Right cardiac atrium (tissue), 5 donors: ENCODE measurements at regions of chr4 and their contacts with region 1.

Region 1: GRCh38 chr4:99405433-99406115 is 29.6 kb downstream of the ADH7 start:
- DNase-seq: peak; percentile 56 to 57 (median 57)
- ATAC-seq: peak; percentile 77 to 84
- H3K4me3 ChIP-seq: no peak overlapping the region
- H3K27ac ChIP-seq: no peak overlapping the region
- H3K4me1 ChIP-seq: no peaks in the 10 kb centered on the region
- H3K27me3 ChIP-seq: no peaks in the 10 kb centered on the region

Region 2: GRCh38 chr4:98462484-98462883 is 943.1 kb before region 1 on chr4:
- intact Hi-C with region 1: loop called in 2 of 4 experiments (anchors 5 to 10 kb)
- DNase-seq: no peak
- ATAC-seq: no peak
- H3K4me3 ChIP-seq: no peak overlapping the region
- H3K27ac ChIP-seq: no peak overlapping the region
- H3K4me1 ChIP-seq: no peaks in the 10 kb centered on the region
- H3K27me3 ChIP-seq: no peaks in the 10 kb centered on the region

Region 3: GRCh38 chr4:98467627-98468072 is 937.9 kb before region 1 on chr4:
- intact Hi-C with region 1: loop called in 2 of 4 experiments (anchors 5 to 10 kb)
- DNase-seq: peak; percentile 55 to 79 (median 73)
- ATAC-seq: peak; percentile 91 to 93
- H3K4me3 ChIP-seq: peak overlapping the region; percentile 53
- H3K27ac ChIP-seq: no peak overlapping the region
- H3K4me1 ChIP-seq: peaks cover 3% of the 10 kb centered on the region
- H3K27me3 ChIP-seq: no peaks in the 10 kb centered on the region

Region 4: GRCh38 chr4:99117876-99118693 is 287.5 kb before region 1 on chr4:
- intact Hi-C with region 1: loop called in 3 of 4 experiments (anchors 5 kb)
- DNase-seq: no peak
- ATAC-seq: no peak
- H3K4me3 ChIP-seq: no peak overlapping the region
- H3K27ac ChIP-seq: no peak overlapping the region
- H3K4me1 ChIP-seq: no peaks in the 10 kb centered on the region
- H3K27me3 ChIP-seq: no peaks in the 10 kb centered on the region

Region 5: GRCh38 chr4:99205153-99205979 is 200.2 kb before region 1 on chr4:
- intact Hi-C with region 1: loop called in 3 of 4 experiments (anchors 10 kb)
- DNase-seq: peak in 2 of 3 donors; percentile 35 to 55
- ATAC-seq: peak; percentile 82 to 84
- H3K4me3 ChIP-seq: no peak overlapping the region
- H3K27ac ChIP-seq: no peak overlapping the region
- H3K4me1 ChIP-seq: peaks cover 2% of the 10 kb centered on the region
- H3K27me3 ChIP-seq: no peaks in the 10 kb centered on the region